GM12878 (cell line): ENCODE measurements at regions of chr14 and their contacts with region 1.

Region 1: DNA sequence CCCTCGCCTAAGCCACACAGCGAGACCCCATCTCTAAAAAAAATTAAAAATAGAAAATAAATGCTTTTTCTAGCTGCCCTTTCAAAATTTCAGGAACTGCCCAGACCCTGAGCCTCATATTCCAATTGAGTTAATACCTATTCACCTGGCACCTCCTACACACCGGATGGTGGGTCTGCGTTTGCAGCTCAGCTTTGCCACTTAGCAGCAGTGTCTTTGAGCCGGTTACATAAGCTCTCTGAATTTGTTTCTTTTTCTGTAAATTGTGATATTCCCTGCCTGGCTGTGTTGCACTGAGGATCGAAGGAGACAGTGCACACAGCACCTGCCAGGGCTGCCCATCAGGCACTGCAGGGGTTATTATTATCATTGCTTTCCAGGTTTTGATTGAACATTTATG is 125.6 kb downstream of the EML1 start:
- DNase-seq: no peak
- ATAC-seq: no peak
- H3K4me3 ChIP-seq: no peak overlapping the region
- H3K27ac ChIP-seq: no peak overlapping the region
- H3K4me1 ChIP-seq: no peaks in the 10 kb centered on the region
- H3K27me3 ChIP-seq: no peaks in the 10 kb centered on the region; a peak in 1 of 4 replicates
- CTCF ChIP-seq: no peak
- EP300 ChIP-seq: no peak
- POLR2A ChIP-seq: no peak
- RAD21 ChIP-seq: no peak

Region 2: DNA sequence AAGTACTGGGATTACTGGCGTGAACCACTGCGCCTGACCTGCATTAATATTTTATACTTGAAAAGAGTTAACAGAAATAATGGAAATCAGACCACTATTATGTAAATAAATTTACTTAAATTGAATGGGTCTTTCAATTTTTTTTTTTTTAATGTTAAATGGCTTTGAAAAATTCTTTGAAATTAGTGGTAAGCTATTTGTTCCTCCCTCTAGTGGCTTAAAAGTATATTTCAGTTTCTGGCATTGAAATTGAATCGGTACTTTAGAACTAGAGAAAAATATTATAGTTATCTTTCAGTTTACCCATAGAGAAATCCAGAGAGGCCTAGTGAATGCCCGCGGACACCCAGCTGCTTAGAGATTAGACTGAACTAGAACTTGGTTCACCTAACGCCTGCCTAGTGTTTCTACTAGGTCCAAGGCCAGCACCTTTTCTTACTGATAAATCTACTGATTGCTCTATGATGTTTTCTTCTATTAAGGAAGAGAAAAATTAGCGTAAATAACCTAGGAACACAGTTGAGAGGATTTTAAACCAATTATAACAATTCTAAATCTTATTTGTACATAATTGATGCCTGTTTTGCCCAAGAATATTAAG is 19.1 kb before region 1 on chr14:
- CTCF ChIA-PET with region 1: interaction called, 15 read pairs
- POLR2A ChIA-PET with region 1: no interaction called
- RAD21 ChIA-PET with region 1: no interaction called
- SMC1A ChIA-PET with region 1: interaction called, 3 read pairs
- in situ Hi-C with region 1: no loop called
- intact Hi-C with region 1: no loop called
- DNase-seq: no peak
- ATAC-seq: peak; percentile 53
- H3K4me3 ChIP-seq: no peak overlapping the region
- H3K27ac ChIP-seq: no peak overlapping the region
- H3K4me1 ChIP-seq: no peaks in the 10 kb centered on the region
- H3K27me3 ChIP-seq: no peaks in the 10 kb centered on the region; a peak in 1 of 4 replicates
- CTCF ChIP-seq: peak in 1 of 3 experiments; percentile 48; a peak in 2 of 6 replicates
- EP300 ChIP-seq: no peak
- POLR2A ChIP-seq: no peak
- RAD21 ChIP-seq: no peak